ENCODE measurements at regions of chr9 and their contacts with region 1.

Region 1: GRCh38 chr9:129641746-129642513 is at the start of gene ASB6:
- DNase-seq: peak; percentile 97
- ATAC-seq: peak; percentile 97
- H3K4me3 Mint-ChIP-seq: peak within 1 kb of the TSS; percentile 87
- H3K27ac Mint-ChIP-seq: peak within 1 kb of the TSS; percentile 73
- H3K4me1 Mint-ChIP-seq: peaks cover 18% of the 10 kb centered on the region
- H3K27me3 Mint-ChIP-seq: no peaks in the 10 kb centered on the region
- total RNA-seq, gene ASB6: 13.4 to 15.0 TPM

Region 2: GRCh38 chr9:129202613-129203555 is 439.0 kb before region 1 on chr9:
- CTCF ChIA-PET with region 1: no interaction called
- POLR2A ChIA-PET with region 1: no interaction called
- intact Hi-C with region 1: loop called in 1 of 2 experiments (anchors 1 kb)
- DNase-seq: peak; percentile 95
- ATAC-seq: peak; percentile 95
- H3K4me3 Mint-ChIP-seq: peak overlapping the region; percentile 57
- H3K27ac Mint-ChIP-seq: peak overlapping the region; percentile 31
- H3K4me1 Mint-ChIP-seq: peaks cover 18% of the 10 kb centered on the region
- H3K27me3 Mint-ChIP-seq: peaks cover 3% of the 10 kb centered on the region

Region 3: DNA sequence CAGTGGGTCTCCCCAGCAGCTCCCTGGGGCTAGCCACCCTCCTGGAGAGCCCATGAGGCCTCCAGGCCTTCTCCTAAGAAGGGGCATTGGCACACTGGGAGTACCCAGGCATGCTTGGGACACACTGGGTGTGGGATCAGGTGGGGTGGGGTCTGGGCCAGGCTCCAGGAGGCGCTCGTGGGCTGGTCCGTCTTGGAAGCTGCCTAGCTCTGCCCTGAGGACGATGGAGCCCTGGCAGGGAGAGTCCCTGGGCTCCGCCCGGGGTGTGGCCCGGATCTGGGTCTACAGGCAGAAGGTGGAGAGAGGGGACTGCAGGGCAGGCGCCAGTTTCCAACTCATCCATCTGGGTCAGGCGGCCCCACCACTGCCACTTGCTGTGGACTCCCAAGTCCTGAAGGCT is 25.9 kb after region 1 on chr9:
- CTCF ChIA-PET with region 1: no interaction called
- POLR2A ChIA-PET with region 1: no interaction called
- intact Hi-C with region 1: loop called in 1 of 2 experiments (anchors 1 kb)
- DNase-seq: no peak
- ATAC-seq: no peak
- H3K4me3 Mint-ChIP-seq: no peak overlapping the region
- H3K27ac Mint-ChIP-seq: no peak overlapping the region
- H3K4me1 Mint-ChIP-seq: no peaks in the 10 kb centered on the region
- H3K27me3 Mint-ChIP-seq: peaks cover 8% of the 10 kb centered on the region

Region 4: DNA sequence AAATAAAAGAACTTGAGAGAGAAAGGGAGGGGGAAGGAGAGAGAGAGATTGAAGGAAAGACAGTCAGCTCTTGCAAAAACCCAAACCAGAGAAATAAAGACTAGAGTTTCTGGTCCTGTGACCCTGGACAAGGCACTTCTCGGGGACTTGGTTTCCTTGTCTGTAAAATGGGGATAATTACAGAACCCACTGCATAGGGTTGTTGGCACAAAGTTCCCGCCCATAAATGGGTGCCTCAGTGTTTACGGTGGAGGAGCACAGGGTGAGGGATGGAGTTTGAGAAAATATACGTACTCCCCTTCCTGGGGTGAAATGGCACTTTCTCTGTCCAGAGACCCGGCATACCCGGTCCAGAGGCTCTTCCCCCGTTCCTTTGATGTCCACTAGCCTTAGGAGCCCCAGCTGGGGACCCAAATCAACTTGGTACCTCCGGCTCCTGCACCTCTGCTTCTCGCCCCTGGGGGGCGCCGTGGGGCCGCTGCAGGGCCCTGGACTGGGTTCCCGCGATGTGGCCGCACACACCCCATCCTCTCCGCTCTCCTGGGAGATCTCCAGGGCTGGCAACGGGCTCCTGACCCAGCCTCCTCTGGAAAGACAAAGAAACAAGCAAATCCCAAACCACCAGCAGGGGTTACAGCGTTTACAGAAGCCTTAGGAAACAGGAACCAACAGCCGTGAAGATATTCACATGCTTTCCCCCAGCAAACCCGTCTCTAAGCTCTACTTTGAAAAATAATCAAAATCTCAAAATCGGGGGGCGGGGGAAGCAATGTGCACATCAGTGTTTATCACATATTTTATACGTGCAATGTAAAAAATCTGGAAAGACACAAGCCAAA is 84.6 kb after region 1 on chr9:
- CTCF ChIA-PET with region 1: interaction called, 3 read pairs
- POLR2A ChIA-PET with region 1: no interaction called
- intact Hi-C with region 1: loop called (anchors 1 to 10 kb)
- DNase-seq: peak; percentile 81
- ATAC-seq: peak; percentile 99
- H3K4me3 Mint-ChIP-seq: peak overlapping the region; percentile 33
- H3K27ac Mint-ChIP-seq: no peak overlapping the region
- H3K4me1 Mint-ChIP-seq: peaks cover 2% of the 10 kb centered on the region
- H3K27me3 Mint-ChIP-seq: no peaks in the 10 kb centered on the region

Region 5: DNA sequence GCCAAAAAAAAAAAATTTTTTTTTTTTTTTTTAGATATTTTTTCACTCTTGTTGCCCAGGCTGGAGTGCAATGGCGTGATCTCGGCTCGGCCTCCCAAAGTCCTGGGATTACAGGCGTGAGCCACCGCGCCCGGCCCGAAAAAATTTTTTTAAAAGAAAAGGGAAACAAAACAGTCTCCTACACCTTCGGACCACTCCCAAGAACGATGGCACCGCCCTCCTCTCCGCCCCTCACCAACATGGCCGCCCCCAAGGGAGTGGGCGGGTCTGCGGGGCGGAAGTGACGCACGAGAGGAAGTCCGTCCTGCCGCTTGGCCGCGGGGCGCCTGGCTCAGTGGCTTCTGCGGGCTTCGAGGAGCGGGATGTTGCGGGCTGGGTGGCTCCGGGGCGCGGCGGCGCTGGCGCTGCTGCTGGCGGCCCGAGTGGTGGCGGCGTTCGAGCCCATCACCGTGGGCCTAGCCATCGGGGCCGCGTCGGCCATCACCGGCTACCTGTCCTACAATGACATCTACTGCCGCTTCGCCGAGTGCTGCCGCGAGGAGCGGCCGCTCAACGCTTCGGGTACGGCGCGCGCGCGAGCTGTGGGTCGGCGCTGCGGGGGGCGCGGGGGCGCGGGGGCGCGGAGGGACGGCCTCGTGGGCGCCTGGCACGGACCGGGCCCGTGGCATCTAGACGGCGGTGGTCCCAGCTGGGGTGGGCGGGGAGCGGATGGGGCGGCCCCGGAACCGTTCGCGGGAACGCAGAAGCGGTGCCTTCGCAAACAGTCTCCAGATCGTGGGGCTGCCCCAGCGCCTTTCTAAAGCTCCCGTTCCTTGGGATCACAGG is 161.1 kb after region 1 on chr9 and contains the start of gene TOR1B:
- CTCF ChIA-PET with region 1: no interaction called
- POLR2A ChIA-PET with region 1: no interaction called
- intact Hi-C with region 1: loop called in 1 of 2 experiments (anchors 1 kb)
- DNase-seq: peak; percentile 95
- ATAC-seq: peak; percentile 92
- H3K4me3 Mint-ChIP-seq: peak within 1 kb of the TSS; percentile 81
- H3K27ac Mint-ChIP-seq: peak within 1 kb of the TSS; percentile 90
- H3K4me1 Mint-ChIP-seq: peaks cover 25% of the 10 kb centered on the region
- H3K27me3 Mint-ChIP-seq: no peaks in the 10 kb centered on the region
- total RNA-seq, gene TOR1B: 18.0 to 22.1 TPM

Region 6: GRCh38 chr9:130053504-130054324 is 411.8 kb after region 1 on chr9 and contains the start of gene GPR107:
- CTCF ChIA-PET with region 1: no interaction called
- POLR2A ChIA-PET with region 1: no interaction called
- intact Hi-C with region 1: loop called in 1 of 2 experiments (anchors 10 kb)
- DNase-seq: peak; percentile 91
- ATAC-seq: peak; percentile 90
- H3K4me3 Mint-ChIP-seq: peak within 1 kb of the TSS; percentile 94
- H3K27ac Mint-ChIP-seq: peak within 1 kb of the TSS; percentile 86
- H3K4me1 Mint-ChIP-seq: peaks cover 30% of the 10 kb centered on the region
- H3K27me3 Mint-ChIP-seq: no peaks in the 10 kb centered on the region
- total RNA-seq, gene GPR107: 17.7 to 19.7 TPM

Region 7: GRCh38 chr9:130118841-130119518 is 477.1 kb after region 1 on chr9:
- CTCF ChIA-PET with region 1: no interaction called
- POLR2A ChIA-PET with region 1: no interaction called
- intact Hi-C with region 1: no loop called
- DNase-seq: peak; percentile 20
- ATAC-seq: peak; percentile 51
- H3K4me3 Mint-ChIP-seq: no peak overlapping the region
- H3K27ac Mint-ChIP-seq: peak overlapping the region; percentile 33
- H3K4me1 Mint-ChIP-seq: no peaks in the 10 kb centered on the region
- H3K27me3 Mint-ChIP-seq: no peaks in the 10 kb centered on the region

Measured in activated CD4-positive, alpha-beta T cell treated with anti-CD3 and anti-CD28 coated beads for 36 hours (primary cell).